OCI-LY7 (cell line): ENCODE measurements at regions of chr19 and their contacts with region 1.

Region 1: GRCh38 chr19:17766543-17767131 is 15.4 kb downstream of the FCHO1 start:
- DNase-seq: peak; percentile 90
- H3K4me3 ChIP-seq: no peak overlapping the region
- H3K27ac ChIP-seq: no peak overlapping the region
- H3K4me1 ChIP-seq: peaks cover 11% of the 10 kb centered on the region
- CTCF ChIP-seq: peak; percentile 97

Region 2: GRCh38 chr19:17616961-17617806 is 149.5 kb before region 1 on chr19:
- CTCF ChIA-PET with region 1: no interaction called
- POLR2A ChIA-PET with region 1: no interaction called
- intact Hi-C with region 1: no loop called
- DNase-seq: peak; percentile 22
- H3K4me3 ChIP-seq: no peak overlapping the region
- H3K27ac ChIP-seq: no peak overlapping the region
- H3K4me1 ChIP-seq: peaks cover 10% of the 10 kb centered on the region
- CTCF ChIP-seq: no peak

Region 3: GRCh38 chr19:17703824-17704463 is 62.7 kb before region 1 on chr19:
- CTCF ChIA-PET with region 1: interaction called, 5 read pairs
- POLR2A ChIA-PET with region 1: no interaction called
- intact Hi-C with region 1: loop called (anchors 1 kb)
- DNase-seq: peak; percentile 75
- H3K4me3 ChIP-seq: no peak overlapping the region
- H3K27ac ChIP-seq: no peak overlapping the region
- H3K4me1 ChIP-seq: no peaks in the 10 kb centered on the region
- CTCF ChIP-seq: peak; percentile 98

Region 4: DNA sequence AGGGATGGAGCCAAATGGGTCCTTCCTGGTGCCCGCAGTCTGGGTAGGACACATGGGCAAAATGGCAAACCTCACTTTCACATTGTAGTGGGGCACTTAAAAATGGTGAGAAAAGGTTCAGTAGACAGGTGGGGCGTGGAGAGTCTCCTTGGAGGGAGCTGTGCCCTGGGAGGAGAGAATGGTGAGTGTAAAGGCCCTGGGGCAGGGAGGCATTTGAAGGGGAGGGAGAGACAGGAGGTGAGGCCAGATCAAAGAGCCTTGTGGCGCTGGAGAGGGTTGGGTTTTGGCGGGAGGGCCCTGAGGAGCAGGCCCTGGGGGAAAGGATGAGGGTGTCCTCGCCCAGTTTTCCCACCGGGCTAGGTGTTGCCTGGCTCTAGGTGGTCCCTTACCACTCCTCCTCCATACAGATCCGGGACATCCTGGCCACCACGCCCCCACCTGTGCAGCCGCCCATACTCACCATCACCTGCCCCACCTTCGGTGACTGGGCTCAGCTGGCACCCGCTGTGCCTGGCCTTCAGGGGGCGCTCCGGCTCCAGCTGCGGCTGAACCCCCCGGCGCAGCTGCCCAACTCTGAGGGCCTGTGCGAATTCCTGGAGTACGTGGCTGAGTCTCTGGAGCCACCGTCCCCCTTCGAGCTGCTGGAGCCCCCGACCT is 41.1 kb before region 1 on chr19:
- CTCF ChIA-PET with region 1: interaction called, 8 read pairs
- POLR2A ChIA-PET with region 1: no interaction called
- intact Hi-C with region 1: loop called (anchors 1 kb)
- DNase-seq: no peak
- H3K4me3 ChIP-seq: no peak overlapping the region
- H3K27ac ChIP-seq: no peak overlapping the region
- H3K4me1 ChIP-seq: peaks cover 16% of the 10 kb centered on the region
- CTCF ChIP-seq: peak; percentile 83